Ovary (tissue), 10 donors: ENCODE measurements at regions of chr7 and their contacts with region 1.

Region 1: GRCh38 chr7:99624484-99624883 is 7.7 kb downstream of the ZSCAN25 start:
- DNase-seq: no peak
- H3K4me3 ChIP-seq: no peak overlapping the region
- H3K27ac ChIP-seq: no peak overlapping the region
- H3K4me1 ChIP-seq: no peaks in the 10 kb centered on the region
- H3K27me3 ChIP-seq: no peaks in the 10 kb centered on the region
- CTCF ChIP-seq: no peak
- EP300 ChIP-seq: no peak
- POLR2A ChIP-seq: no peak

Region 2: GRCh38 chr7:99514050-99514449 is 110.4 kb before region 1 on chr7:
- intact Hi-C with region 1: loop called in 1 of 4 experiments (anchors 10 kb)
- DNase-seq: no peak
- H3K4me3 ChIP-seq: no peak overlapping the region
- H3K27ac ChIP-seq: no peak overlapping the region
- H3K4me1 ChIP-seq: no peaks in the 10 kb centered on the region
- H3K27me3 ChIP-seq: no peaks in the 10 kb centered on the region
- CTCF ChIP-seq: no peak
- EP300 ChIP-seq: no peak
- POLR2A ChIP-seq: no peak

Region 3: DNA sequence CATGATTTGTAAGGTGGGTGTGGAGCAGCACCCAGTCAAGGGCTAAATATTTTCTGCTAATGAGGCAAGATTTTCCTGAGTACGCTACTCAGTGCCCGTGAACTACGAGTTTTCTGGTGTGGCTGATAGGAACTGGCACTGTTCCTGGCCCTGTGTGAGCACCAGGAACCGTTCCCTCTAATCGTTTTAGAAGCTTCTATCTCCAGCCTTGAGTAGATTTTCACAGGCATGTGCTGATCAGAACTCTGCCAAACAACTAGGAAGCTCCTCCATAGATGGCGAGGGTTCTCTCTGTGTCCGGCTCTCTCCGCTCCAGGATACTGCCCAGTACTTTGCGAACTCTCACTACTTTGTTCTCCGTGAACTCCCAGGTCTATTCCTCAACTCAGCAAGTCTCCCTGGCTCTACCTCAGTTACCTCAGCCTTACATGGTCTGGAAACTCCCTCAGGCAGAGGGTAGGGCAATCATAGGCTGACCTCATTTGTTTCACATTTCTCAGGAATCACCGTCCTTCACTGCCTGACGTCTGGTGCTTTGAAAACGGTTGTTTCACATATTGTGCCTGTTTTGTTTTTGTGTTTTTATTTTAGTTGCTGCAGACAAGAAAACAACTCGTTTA is 277.2 kb after region 1 on chr7:
- intact Hi-C with region 1: loop called in 1 of 4 experiments (anchors 10 kb)
- DNase-seq: no peak
- H3K4me3 ChIP-seq: no peak overlapping the region
- H3K27ac ChIP-seq: no peak overlapping the region
- H3K4me1 ChIP-seq: no peaks in the 10 kb centered on the region
- H3K27me3 ChIP-seq: no peaks in the 10 kb centered on the region
- CTCF ChIP-seq: no peak
- EP300 ChIP-seq: no peak
- POLR2A ChIP-seq: no peak

Region 4: GRCh38 chr7:100247152-100247757 is 622.8 kb after region 1 on chr7:
- intact Hi-C with region 1: no loop called
- DNase-seq: peak in 1 of 5 donors; percentile 46
- H3K4me3 ChIP-seq: no peak overlapping the region
- H3K27ac ChIP-seq: no peak overlapping the region
- H3K4me1 ChIP-seq: peaks cover 4% of the 10 kb centered on the region
- H3K27me3 ChIP-seq: no peaks in the 10 kb centered on the region
- CTCF ChIP-seq: no peak
- EP300 ChIP-seq: no peak
- POLR2A ChIP-seq: no peak